CD4-positive, alpha-beta T cell (primary cell): ENCODE measurements at regions of chr20 and their contacts with region 1.

Region 1: DNA sequence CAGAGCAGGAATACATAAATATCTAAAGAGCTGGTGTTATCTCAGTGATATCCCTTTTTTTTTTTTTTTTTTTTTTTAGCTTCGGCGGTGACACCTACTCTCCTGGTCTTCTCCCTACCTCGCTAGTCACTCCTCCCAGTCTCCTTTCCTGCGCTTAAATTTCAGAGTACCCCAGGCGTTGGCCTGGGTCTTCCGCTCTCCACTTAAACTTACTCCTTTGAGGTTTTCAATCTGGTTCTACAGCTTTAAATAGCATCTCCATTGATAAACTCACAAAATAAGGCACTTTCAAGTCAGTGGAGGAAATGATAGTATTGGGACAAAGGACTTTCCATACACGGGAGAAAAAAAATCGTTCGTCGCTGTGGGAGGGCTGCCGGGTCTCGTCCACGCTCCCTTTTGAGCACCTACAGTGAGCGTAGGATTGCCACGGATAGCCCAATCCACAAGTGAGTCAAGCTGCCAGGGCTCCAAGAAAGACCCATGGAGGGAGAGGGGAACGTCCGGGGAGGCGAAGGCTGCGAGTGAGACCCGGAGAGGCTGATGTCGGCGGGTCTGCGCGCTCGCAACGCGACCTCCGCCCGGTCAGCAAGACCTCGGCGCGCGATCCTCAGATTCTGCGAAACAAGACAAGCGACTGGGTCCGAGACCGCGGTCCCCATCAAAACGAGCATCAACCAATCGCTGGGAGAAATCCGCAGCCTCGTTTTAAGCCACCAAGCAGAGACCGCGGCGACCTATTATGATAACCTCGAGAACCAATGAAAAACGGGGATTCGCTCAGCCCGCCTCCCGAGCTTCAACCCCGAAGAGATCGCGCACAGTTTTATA is 672 bp upstream of the SRSF6 start:
- DNase-seq: peak; percentile 70 to 94 (median 80)
- ATAC-seq: peak; percentile 78
- H3K4me3 ChIP-seq: peak overlapping the region; percentile 86
- H3K4me3 Mint-ChIP-seq: peak overlapping the region; percentile 94
- H3K27ac ChIP-seq: peak overlapping the region; percentile 99 to 100
- H3K27ac Mint-ChIP-seq: peak overlapping the region; percentile 95
- H3K4me1 ChIP-seq: peaks cover 18% of the 10 kb centered on the region
- H3K4me1 Mint-ChIP-seq: peaks cover 37% of the 10 kb centered on the region
- H3K27me3 ChIP-seq: peaks cover 0 to 8% of the 10 kb centered on the region in 2 experiments
- H3K27me3 Mint-ChIP-seq: peaks cover 13% of the 10 kb centered on the region
- CTCF ChIP-seq: no peak

Region 2: DNA sequence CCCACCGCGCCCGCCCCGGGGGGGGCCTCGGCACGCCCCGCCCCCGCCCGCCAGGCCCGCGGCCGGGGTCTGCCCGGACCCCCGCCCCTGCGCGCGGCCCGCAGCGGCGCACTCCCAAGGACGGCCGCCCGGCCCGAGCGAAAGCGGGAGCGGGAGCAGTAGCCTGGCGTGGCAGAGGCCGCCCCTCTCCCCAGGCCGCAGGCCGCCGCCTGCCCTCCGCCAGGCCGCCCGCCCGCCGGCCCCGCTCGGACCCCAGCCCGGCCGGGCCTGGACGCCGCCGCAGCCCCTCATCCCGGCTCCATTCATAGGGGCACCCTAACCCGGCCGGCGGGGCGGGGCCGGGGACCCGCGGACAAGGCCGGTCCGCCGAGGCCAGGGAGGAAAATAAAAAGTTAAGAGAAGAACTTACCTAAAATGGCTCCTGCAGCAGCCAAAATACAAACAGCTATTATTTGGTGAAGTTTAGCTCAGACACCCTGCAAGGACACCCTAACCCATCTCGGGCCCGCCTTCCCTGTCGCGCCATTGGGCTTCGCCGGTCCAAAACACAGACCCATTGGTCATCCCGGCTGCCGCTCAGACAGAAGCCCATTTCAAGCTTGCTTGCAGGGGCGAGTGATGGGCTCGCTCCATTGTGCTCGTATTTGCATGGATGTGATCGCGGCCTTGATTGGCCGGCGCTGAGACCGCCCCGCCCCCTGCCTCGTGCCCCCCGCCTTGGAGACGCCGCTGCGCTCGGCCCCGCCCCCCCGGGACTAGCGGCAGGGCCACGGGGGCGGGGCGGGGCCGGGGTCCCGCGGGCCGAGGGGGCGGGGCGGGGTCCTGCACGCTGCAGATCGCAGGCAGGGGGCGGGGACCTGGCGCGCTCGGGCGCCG is 1838.9 kb before region 1 on chr20 and contains the start of gene CHD6:
- CTCF ChIA-PET with region 1: no interaction called
- POLR2A ChIA-PET with region 1: no interaction called
- intact Hi-C with region 1: loop called in 1 of 2 experiments (anchors 10 kb)
- DNase-seq: peak; percentile 98 to 100 (median 99)
- ATAC-seq: peak; percentile 96
- H3K4me3 ChIP-seq: peak within 1 kb of the TSS; percentile 75
- H3K4me3 Mint-ChIP-seq: peak within 1 kb of the TSS; percentile 99
- H3K27ac ChIP-seq: peak within 1 kb of the TSS; percentile 10 to 53
- H3K27ac Mint-ChIP-seq: peak within 1 kb of the TSS; percentile 93
- H3K4me1 ChIP-seq: peaks cover 19% of the 10 kb centered on the region
- H3K4me1 Mint-ChIP-seq: peaks cover 55% of the 10 kb centered on the region
- H3K27me3 ChIP-seq: no peaks in the 10 kb centered on the region
- H3K27me3 Mint-ChIP-seq: no peaks in the 10 kb centered on the region
- CTCF ChIP-seq: no peak
- total RNA-seq, gene CHD6: 114 to 126 TPM

Region 3: DNA sequence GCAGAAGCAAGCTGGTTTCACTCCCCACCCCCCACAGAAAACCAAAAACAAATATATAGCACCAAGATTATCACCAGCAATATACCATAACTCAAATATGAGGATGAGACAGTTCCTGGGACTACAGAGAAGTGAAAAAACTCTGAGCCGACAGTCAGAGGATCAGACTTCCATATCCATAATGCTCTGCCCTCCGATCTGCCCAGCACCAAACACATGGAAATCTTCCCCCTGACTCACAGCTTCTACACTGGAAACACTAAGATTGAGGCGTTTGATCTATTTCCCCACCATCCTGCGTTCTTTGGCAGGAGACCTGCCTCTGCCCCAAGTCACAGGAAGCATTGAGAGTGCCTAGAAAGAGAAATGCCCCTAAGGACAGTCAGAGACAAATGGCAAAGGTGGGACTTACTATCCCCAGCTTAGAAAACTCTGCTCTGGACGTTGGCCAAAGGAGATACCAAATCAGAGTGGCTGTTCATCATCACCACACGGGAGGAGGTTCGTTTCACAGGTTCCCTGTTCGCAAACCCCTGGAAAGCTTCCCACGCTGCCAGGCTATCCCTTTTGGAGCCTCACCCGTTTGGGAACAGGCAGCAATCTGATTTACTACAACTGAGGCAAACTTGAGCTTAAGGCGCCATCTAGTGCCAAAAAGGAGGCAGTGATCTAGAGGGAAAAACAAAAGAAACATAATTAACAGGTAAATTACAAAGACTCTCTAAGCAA is 48.0 kb before region 1 on chr20:
- CTCF ChIA-PET with region 1: no interaction called
- POLR2A ChIA-PET with region 1: no interaction called
- intact Hi-C with region 1: loop called in 1 of 2 experiments (anchors 1 kb)
- DNase-seq: no peak
- ATAC-seq: no peak
- H3K4me3 ChIP-seq: no peak overlapping the region
- H3K4me3 Mint-ChIP-seq: no peak overlapping the region
- H3K27ac ChIP-seq: no peak overlapping the region
- H3K27ac Mint-ChIP-seq: no peak overlapping the region
- H3K4me1 ChIP-seq: no peaks in the 10 kb centered on the region
- H3K4me1 Mint-ChIP-seq: no peaks in the 10 kb centered on the region
- H3K27me3 ChIP-seq: peaks cover 12 to 26% of the 10 kb centered on the region in 2 experiments
- H3K27me3 Mint-ChIP-seq: peaks cover 71% of the 10 kb centered on the region
- CTCF ChIP-seq: no peak

Region 4: DNA sequence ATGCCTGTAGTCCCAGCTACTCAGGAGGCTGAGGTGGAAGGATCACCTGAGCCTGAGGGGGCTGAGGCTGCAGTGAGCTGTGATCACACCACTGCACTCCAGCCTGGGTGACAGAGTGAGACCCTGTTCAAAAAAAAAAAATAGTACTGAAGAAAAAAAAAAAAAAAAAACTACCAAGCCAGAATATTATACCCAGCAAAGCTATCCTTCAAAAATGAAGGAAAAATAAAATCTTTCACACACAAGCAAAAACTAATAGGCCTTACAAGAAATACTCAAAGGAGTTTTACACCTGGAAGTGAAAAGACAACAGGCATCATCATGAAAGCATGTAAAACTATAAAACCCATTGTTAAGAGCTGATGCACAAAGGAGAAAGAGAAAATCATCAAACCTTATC is 36.8 kb before region 1 on chr20:
- CTCF ChIA-PET with region 1: no interaction called
- POLR2A ChIA-PET with region 1: no interaction called
- intact Hi-C with region 1: no loop called
- DNase-seq: no peak
- ATAC-seq: no peak
- H3K4me3 ChIP-seq: no peak overlapping the region
- H3K4me3 Mint-ChIP-seq: no peak overlapping the region
- H3K27ac ChIP-seq: no peak overlapping the region
- H3K27ac Mint-ChIP-seq: no peak overlapping the region
- H3K4me1 ChIP-seq: no peaks in the 10 kb centered on the region
- H3K4me1 Mint-ChIP-seq: no peaks in the 10 kb centered on the region
- H3K27me3 ChIP-seq: no peaks in the 10 kb centered on the region
- H3K27me3 Mint-ChIP-seq: peaks cover 33% of the 10 kb centered on the region
- CTCF ChIP-seq: no peak

Region 5: DNA sequence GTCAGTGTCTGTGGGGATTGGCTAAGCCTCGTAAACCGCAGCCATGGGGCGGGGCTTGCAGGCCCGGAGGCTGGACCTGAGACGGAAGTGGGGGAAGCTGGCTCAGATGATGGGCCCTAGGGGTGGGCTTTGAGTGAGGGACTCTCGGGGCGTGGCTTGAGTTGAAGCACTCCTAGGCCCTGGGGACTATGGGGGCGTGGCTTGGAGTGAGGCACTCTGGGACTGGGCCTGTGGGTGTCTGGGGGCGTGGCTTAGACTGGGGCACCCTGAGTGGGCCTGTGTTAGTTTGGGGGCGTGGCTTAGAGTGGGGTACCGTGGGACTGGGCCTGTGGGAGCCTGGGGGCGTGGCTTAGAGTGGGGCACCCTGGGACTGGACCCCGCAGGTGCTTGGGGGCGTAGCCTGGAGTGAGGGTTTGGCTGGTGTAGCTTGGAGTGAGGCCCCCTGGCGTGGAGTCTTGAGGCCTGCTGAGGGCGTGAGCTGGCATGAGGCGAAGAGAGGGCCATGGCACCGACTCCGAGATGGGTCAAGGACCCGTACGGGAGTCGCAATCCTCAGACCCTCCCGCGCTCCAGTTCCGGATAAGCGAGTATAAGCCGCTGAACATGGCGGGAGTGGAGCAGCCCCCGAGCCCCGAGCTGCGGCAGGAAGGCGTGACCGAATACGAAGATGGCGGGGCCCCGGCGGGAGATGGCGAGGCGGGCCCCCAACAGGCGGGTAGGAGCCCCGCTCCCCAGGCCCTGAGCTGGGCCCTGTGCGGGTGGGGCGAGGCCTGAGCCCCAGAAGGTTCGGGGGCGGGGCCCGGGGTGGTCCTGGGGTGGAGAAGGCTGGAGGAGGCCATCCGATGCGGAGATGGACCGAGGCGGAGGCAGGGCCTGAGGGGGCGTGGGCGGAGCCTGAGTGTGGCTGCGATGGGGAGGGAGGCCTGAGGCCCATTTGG is 57.3 kb after region 1 on chr20:
- CTCF ChIA-PET with region 1: no interaction called
- POLR2A ChIA-PET with region 1: interaction called, 26 read pairs
- intact Hi-C with region 1: loop called (anchors 2 to 5 kb)
- DNase-seq: peak; percentile 77 to 98 (median 86)
- ATAC-seq: peak; percentile 92
- H3K4me3 ChIP-seq: peak overlapping the region; percentile 65
- H3K4me3 Mint-ChIP-seq: peak overlapping the region; percentile 91
- H3K27ac ChIP-seq: peak overlapping the region in 1 of 2 donors; percentile 29
- H3K27ac Mint-ChIP-seq: peak overlapping the region; percentile 80
- H3K4me1 ChIP-seq: peaks cover 16% of the 10 kb centered on the region
- H3K4me1 Mint-ChIP-seq: peaks cover 25% of the 10 kb centered on the region
- H3K27me3 ChIP-seq: peaks cover 0 to 2% of the 10 kb centered on the region in 2 experiments
- H3K27me3 Mint-ChIP-seq: peaks cover 3% of the 10 kb centered on the region
- CTCF ChIP-seq: no peak

Region 6: GRCh38 chr20:43590392-43591323 is 133.6 kb after region 1 on chr20 and contains the start of gene IFT52:
- CTCF ChIA-PET with region 1: no interaction called
- POLR2A ChIA-PET with region 1: interaction called, 15 read pairs
- intact Hi-C with region 1: loop called (anchors 1 to 2 kb)
- DNase-seq: peak; percentile 77 to 96 (median 86)
- ATAC-seq: peak; percentile 95
- H3K4me3 ChIP-seq: peak within 1 kb of the TSS; percentile 79
- H3K4me3 Mint-ChIP-seq: peak within 1 kb of the TSS; percentile 86
- H3K27ac ChIP-seq: peak within 1 kb of the TSS; percentile 69 to 95
- H3K27ac Mint-ChIP-seq: peak within 1 kb of the TSS; percentile 91
- H3K4me1 ChIP-seq: peaks cover 15% of the 10 kb centered on the region
- H3K4me1 Mint-ChIP-seq: peaks cover 18% of the 10 kb centered on the region
- H3K27me3 ChIP-seq: no peaks in the 10 kb centered on the region
- H3K27me3 Mint-ChIP-seq: peaks cover 6% of the 10 kb centered on the region
- CTCF ChIP-seq: no peak
- total RNA-seq, gene IFT52: 13.7 to 15.5 TPM

Region 7: DNA sequence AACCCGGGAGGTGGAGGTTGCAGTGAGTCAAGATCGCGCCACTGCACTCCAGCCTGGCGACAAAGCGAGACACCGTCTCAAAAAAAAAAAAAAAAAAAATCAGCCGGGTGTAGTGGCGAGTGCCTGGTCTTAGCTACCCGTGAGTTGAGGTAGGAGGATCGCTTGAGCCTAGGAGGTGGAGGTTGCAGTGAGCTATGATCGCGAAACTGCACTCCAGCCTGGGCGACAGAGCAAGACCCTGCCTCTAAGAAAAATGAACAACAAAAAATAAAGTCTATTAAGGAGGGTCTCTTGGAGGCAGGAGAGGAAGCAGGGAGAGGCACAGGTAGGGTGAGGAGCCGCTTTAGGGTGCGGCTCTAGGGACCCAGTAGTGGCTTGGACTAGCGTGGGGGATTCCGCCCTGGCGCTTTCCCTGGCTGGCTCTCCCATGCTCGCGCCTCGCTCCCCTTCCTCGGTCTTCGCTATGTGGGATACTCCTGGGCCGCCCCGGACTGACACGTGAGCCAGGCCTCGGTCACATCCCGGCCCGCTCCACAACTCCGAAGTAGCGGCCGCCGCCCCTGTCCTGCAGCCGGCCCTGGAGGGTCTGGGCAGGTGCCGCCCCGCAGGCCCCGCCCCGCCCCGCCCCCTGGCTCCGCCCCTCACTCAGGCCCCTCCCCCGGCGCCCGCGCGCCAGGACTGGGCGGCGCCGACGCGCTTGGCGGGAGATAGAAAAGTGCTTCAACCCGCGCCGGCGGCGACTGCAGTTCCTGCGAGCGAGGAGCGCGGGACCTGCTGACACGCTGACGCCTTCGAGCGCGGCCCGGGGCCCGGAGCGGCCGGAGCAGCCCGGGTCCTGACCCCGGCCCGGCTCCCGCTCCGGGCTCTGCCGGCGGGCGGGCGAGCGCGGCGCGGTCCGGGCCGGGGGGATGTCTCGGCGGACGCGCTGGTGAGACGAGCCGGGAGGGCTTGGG is 209.6 kb after region 1 on chr20 and contains the start of gene MYBL2:
- CTCF ChIA-PET with region 1: no interaction called
- POLR2A ChIA-PET with region 1: interaction called, 3 read pairs
- intact Hi-C with region 1: loop called in 1 of 2 experiments (anchors 2 kb)
- DNase-seq: peak; percentile 50 to 86 (median 64)
- ATAC-seq: peak; percentile 96
- H3K4me3 ChIP-seq: peak within 1 kb of the TSS; percentile 61
- H3K4me3 Mint-ChIP-seq: peak within 1 kb of the TSS; percentile 58
- H3K27ac ChIP-seq: no peak within 1 kb of the TSS
- H3K27ac Mint-ChIP-seq: no peak within 1 kb of the TSS
- H3K4me1 ChIP-seq: peaks cover 15% of the 10 kb centered on the region
- H3K4me1 Mint-ChIP-seq: no peaks in the 10 kb centered on the region
- H3K27me3 ChIP-seq: peaks cover 16 to 24% of the 10 kb centered on the region in 2 experiments
- H3K27me3 Mint-ChIP-seq: peaks cover 27% of the 10 kb centered on the region
- CTCF ChIP-seq: no peak
- total RNA-seq, gene MYBL2: 0.56 to 0.69 TPM

Region 8: GRCh38 chr20:44018259-44018941 is 561.4 kb after region 1 on chr20:
- CTCF ChIA-PET with region 1: no interaction called
- POLR2A ChIA-PET with region 1: no interaction called
- intact Hi-C with region 1: no loop called
- DNase-seq: no peak
- ATAC-seq: no peak
- H3K4me3 ChIP-seq: no peak overlapping the region
- H3K4me3 Mint-ChIP-seq: no peak overlapping the region
- H3K27ac ChIP-seq: no peak overlapping the region
- H3K27ac Mint-ChIP-seq: no peak overlapping the region
- H3K4me1 ChIP-seq: peaks cover 32% of the 10 kb centered on the region
- H3K4me1 Mint-ChIP-seq: peaks cover 62% of the 10 kb centered on the region
- H3K27me3 ChIP-seq: peaks cover 0 to 3% of the 10 kb centered on the region in 2 experiments
- H3K27me3 Mint-ChIP-seq: no peaks in the 10 kb centered on the region
- CTCF ChIP-seq: no peak

Region 9: DNA sequence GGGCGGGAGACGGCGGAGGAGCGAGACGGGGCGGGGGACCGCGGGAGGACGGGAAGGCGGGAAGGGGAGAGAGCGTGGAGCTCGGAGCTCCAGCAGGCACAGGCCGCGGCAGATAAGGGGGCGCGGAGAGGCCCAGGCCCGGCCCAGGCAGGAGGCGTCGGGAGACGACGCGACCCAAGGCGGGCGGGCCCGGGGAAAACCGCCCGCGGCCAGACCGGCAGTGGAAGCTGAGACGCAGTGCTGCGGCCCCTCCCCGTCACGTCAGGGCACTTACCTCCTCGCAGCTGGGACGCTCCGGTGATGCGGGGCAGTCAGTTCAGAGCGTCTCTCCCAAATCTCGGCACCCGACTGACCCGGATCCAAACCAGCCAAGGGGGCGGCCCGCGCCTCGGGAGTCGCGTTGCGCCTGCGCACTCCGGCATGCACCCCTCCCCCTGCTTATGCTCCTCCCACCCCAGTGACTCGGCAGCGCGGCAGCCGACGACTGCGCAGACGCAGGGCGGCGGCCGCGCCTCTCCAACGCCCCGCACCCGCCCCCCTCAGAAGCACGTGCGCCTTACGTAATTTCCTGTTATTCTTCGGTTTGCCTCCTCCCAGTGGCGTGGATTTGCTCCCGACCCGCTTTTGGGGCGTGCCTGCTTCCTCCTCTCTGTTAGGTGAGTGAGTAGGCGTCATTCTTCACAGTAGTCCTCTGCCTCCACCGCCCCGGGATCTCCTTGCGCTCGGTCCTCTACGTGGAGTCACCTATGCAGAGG is 753.6 kb after region 1 on chr20 and contains the start of gene OSER1:
- CTCF ChIA-PET with region 1: no interaction called
- POLR2A ChIA-PET with region 1: interaction called, 3 read pairs
- intact Hi-C with region 1: loop called in 1 of 2 experiments (anchors 2 kb)
- DNase-seq: peak; percentile 96 to 100 (median 98)
- ATAC-seq: peak; percentile 83
- H3K4me3 ChIP-seq: peak within 1 kb of the TSS; percentile 78
- H3K4me3 Mint-ChIP-seq: peak within 1 kb of the TSS; percentile 92
- H3K27ac ChIP-seq: peak within 1 kb of the TSS; percentile 95 to 98
- H3K27ac Mint-ChIP-seq: peak within 1 kb of the TSS; percentile 99
- H3K4me1 ChIP-seq: peaks cover 29% of the 10 kb centered on the region
- H3K4me1 Mint-ChIP-seq: peaks cover 67% of the 10 kb centered on the region
- H3K27me3 ChIP-seq: no peaks in the 10 kb centered on the region
- H3K27me3 Mint-ChIP-seq: no peaks in the 10 kb centered on the region
- CTCF ChIP-seq: no peak
- total RNA-seq, gene OSER1: 172 TPM